Ovary (tissue), 10 donors: ENCODE measurements at regions of chr6 and their contacts with region 1.

Region 1: DNA sequence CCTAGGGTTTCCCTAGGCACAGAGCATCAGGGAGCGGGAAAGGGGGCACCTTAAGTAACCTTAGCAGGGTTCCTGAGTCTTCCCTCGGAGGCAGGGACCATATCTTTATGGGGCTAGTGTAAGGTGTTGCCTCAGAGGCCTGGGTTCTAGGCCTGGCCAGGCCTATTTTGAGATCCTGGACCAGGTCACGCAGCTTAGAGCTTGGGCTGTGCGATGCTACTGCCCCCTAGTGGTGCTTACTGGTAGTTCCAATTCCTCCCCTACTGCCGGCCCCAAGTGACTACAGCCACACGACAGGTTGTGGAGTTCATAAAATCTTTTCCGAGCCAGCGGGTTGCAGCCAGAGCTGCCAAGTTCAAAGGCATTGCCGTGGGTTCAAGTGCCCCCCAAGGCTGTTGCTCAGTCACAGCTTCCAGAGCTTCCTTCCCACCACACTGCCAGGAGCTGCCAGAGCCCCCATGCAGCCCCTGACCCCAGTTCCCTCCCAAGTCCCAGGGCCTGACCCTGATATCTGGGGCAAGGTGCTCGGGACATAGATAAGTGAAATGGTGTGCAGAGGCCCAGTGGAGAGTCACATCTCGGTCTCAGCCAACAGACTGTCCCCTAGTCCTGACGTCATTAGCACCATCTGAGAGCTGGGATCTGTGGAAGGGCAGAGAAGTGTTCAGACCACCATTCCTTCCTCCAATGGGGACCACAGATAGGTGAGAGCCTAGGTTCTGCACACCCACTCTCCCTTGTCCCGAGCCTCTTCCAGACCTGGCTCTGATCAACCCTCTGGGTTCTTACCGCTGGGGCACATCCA is 3.3 kb downstream of the LRRC73 start:
- DNase-seq: peak; percentile 67 to 86 (median 81)
- H3K4me3 ChIP-seq: no peak overlapping the region
- H3K27ac ChIP-seq: peak overlapping the region in 1 of 2 donors; percentile 52
- H3K4me1 ChIP-seq: peaks cover 9% of the 10 kb centered on the region
- H3K27me3 ChIP-seq: no peaks in the 10 kb centered on the region
- CTCF ChIP-seq: peak; percentile 88 to 91 (median 88)
- EP300 ChIP-seq: no peak
- POLR2A ChIP-seq: no peak

Region 2: DNA sequence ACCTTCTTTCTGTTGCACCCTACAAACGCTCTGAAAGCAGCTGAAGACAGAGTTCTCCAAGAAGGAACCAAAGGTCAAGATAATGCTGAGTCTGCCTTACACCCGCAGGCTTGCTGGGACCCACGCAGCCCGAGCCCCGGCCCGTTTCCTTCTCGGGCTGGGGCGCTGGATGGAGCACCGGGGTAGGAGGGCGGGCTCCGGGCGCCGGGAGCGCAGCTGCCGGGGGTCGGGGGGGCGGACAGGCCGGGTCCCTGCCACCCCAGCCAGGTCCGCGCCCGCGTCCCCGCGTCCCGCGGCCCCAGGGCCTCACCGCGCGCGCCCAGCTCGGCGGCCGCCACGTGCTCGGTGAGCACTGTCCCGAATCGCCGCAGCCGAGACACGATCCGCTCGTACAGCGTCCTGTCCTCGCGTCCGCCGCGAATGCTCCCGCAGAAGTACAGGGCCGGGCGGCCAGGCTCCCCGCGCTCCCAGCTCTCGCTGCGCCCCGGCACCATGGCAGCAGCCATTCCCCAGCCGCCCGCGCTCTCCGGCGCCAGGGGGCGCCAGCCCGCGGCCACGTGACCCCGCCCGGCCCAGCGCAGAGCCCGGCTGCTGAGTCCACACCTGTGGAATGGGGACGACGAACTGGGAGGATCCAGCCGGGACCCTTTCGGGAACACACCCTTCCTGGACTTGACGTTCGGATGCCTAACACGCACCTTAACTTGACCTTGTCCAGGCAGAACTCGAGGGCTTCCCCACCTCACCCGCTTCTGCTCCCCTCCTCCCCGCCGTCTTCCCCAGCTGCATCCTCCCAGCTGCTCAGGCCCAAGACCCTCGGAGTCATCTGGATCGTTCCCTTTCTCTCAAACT is 277.7 kb before region 1 on chr6 and contains the start of gene DNPH1:
- intact Hi-C with region 1: loop called in 1 of 4 experiments (anchors 10 kb)
- DNase-seq: peak; percentile 75 to 89 (median 81)
- H3K4me3 ChIP-seq: peak within 1 kb of the TSS; percentile 59
- H3K27ac ChIP-seq: peak within 1 kb of the TSS; percentile 33 to 64
- H3K4me1 ChIP-seq: peaks cover 3% of the 10 kb centered on the region
- H3K27me3 ChIP-seq: no peaks in the 10 kb centered on the region
- CTCF ChIP-seq: peak; percentile 89 to 96 (median 96)
- EP300 ChIP-seq: no peak
- POLR2A ChIP-seq: peak; percentile 33
- total RNA-seq, gene DNPH1: 25.0 to 120 (median 44.7) TPM

Region 3: DNA sequence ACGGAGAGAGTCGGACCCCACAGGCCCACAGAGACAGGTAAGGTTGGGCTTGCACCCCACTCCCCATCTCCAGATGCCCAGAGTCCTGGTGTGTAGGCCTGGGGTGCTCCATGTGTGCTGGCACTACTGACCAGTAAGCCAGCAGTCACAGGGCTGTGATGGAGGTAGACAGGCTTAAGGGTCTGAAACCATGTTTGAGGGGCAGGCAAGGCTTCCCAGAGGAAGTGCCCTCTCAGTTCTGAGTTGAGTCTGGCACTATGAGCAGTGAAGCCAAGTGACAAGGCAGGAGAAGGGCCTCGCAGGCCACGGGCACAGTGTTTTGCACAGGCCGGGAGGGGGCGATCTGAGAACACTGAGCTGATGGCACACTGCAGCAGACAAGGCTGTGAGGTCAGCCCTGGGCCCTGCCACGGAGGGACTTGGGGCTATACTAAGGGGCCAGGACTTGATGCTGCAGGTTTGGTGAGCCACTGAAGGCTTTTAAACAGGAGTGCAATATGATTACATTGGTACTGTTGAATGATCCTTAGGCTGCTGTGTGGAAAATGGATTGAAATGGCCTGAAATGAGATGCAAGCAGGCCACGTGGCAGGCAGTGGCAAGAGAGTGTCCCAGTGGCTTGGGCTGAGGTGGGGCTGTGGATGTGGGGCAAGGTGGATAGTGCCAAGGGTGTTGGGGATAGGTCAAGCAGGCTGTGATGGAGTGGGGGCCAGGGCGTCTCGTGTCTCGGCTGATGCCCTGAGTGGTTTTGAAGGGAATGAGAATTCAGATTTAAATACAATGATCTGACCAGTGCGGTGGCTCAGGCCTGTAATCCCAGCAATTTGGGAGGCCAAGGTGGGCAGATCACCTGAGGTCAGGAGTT is 243.3 kb before region 1 on chr6:
- intact Hi-C with region 1: loop called in 1 of 4 experiments (anchors 10 kb)
- DNase-seq: peak in 3 of 5 donors; percentile 42 to 63 (median 50)
- H3K4me3 ChIP-seq: no peak overlapping the region
- H3K27ac ChIP-seq: no peak overlapping the region
- H3K4me1 ChIP-seq: no peaks in the 10 kb centered on the region
- H3K27me3 ChIP-seq: no peaks in the 10 kb centered on the region
- CTCF ChIP-seq: peak in 1 of 3 donors; percentile 21
- EP300 ChIP-seq: no peak
- POLR2A ChIP-seq: no peak

Region 4: DNA sequence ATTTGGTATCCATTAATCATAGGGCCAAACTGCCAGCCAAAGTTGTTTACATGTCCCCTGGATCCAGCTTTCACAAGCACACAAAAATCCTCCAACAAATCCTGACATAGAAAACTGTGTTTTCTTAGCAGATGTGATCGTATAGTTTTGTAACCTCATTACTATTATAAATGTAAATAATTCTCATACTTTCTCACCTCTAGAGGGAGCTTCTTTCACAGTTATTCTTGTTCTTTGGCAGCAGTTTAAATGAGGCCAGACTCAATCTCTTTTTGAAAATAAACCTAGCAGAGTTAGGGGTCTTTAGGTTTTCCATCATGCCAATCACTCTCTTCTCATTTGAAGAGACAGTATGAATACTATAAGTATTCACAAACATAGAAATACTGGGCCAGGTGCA is 120.4 kb before region 1 on chr6:
- intact Hi-C with region 1: loop called in 3 of 4 experiments (anchors 5 kb)
- DNase-seq: no peak
- H3K4me3 ChIP-seq: no peak overlapping the region
- H3K27ac ChIP-seq: no peak overlapping the region
- H3K4me1 ChIP-seq: no peaks in the 10 kb centered on the region
- H3K27me3 ChIP-seq: no peaks in the 10 kb centered on the region
- CTCF ChIP-seq: peak in 1 of 3 donors; percentile 39
- EP300 ChIP-seq: no peak
- POLR2A ChIP-seq: no peak

Region 5: GRCh38 chr6:43427406-43428111 is 79.3 kb before region 1 on chr6 and contains the start of gene ABCC10:
- intact Hi-C with region 1: no loop called
- DNase-seq: peak; percentile 91 to 96 (median 93)
- H3K4me3 ChIP-seq: peak within 1 kb of the TSS; percentile 79
- H3K27ac ChIP-seq: peak within 1 kb of the TSS in 1 of 2 donors; percentile 42
- H3K4me1 ChIP-seq: peaks cover 6% of the 10 kb centered on the region
- H3K27me3 ChIP-seq: no peaks in the 10 kb centered on the region
- CTCF ChIP-seq: peak; percentile 28 to 49 (median 43)
- EP300 ChIP-seq: no peak
- POLR2A ChIP-seq: no peak
- total RNA-seq, gene ABCC10: 11.7 to 34.9 (median 27.0) TPM

Region 6: DNA sequence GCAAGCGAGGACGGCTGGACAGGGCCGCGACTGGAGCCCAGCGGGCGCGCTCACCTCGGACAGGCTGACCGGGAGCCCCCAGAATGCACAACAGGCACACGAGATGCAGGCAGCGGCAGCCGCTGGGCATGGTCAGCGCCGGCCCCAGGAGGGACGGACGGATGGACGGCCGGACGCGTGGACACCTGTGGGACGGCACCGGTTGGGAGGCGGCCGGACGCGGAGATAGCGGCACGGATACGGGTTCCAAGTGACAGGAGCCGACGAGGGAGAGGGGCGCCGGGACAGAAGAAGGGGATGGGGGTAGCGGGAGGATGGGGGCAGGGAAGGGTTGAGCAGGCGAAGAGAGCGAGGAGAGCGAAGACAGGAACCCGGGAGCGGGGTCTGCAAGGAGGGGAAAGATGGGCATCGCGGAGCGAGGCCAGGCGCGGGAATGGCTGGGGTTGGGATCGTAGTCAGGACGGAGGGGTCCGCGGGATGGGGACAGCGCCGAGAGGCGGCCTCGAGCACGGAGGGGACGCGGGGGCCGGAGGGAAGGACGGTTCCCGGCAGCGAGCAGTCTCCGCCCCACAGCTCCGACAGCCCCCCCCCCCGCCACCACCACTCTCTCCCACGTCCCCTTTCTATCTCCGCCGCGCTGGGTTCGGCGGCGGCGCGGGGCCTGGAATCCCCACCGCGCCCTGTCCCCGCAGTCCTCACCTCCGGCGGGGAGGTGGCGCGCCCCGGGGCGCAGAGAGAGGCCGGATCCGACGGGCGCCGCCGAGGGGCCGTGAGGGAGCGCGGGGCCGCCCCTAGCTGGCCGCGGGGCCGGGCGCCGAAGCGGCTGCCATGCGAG is 52.0 kb before region 1 on chr6:
- intact Hi-C with region 1: loop called in 3 of 4 experiments (anchors 2 to 5 kb)
- DNase-seq: peak; percentile 75 to 92 (median 76)
- H3K4me3 ChIP-seq: peak overlapping the region; percentile 23
- H3K27ac ChIP-seq: no peak overlapping the region
- H3K4me1 ChIP-seq: peaks cover 1% of the 10 kb centered on the region
- H3K27me3 ChIP-seq: no peaks in the 10 kb centered on the region
- CTCF ChIP-seq: no peak
- EP300 ChIP-seq: no peak
- POLR2A ChIP-seq: no peak

Region 7: GRCh38 chr6:44172731-44173500 is 666.0 kb after region 1 on chr6:
- intact Hi-C with region 1: loop called in 1 of 4 experiments (anchors 5 kb)
- DNase-seq: peak; percentile 68 to 87 (median 86)
- H3K4me3 ChIP-seq: no peak overlapping the region
- H3K27ac ChIP-seq: no peak overlapping the region
- H3K4me1 ChIP-seq: peaks cover under 1% of the 10 kb centered on the region
- H3K27me3 ChIP-seq: no peaks in the 10 kb centered on the region
- CTCF ChIP-seq: peak; percentile 69 to 87 (median 72)
- EP300 ChIP-seq: no peak
- POLR2A ChIP-seq: no peak